Activated CD4-positive, alpha-beta T cell treated with anti-CD3 and anti-CD28 coated beads for 36 hours (primary cell): ENCODE measurements at regions of chr20 and their contacts with region 1.

Region 1: DNA sequence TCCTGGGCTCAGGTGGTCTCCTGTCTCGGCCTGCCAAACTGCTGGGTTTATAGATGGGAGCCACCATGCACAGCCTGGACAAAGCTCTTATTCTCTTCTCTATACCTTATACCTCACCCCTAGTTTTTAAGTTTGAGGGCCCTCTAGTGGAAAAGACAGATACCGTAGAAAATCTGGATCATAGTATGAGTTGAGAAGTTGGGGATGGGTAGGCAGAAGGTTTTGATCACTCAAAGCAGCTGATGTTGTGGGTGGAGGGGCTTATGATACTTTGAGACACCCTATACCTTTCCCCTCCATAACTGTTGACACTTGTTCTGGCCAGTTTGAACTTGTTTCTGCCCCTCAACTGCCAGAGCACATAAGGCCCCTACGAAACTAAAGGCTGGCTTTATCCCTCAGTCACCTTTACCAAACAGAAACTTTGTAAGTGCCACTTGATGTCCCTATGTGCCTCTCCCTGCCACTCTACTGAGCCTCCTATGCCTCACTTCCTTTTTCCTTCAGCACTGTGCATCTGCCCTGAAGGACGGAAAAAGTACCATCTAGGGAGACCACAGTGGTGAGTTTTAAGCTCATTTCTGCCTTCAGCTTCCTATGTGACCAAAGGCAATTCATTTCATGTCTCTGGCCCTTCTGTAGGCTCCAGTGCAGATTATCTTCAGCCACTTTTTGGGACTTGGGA is 28.6 kb downstream of the RALY start:
- DNase-seq: no peak
- ATAC-seq: peak; percentile 83
- H3K4me3 Mint-ChIP-seq: no peak overlapping the region
- H3K27ac Mint-ChIP-seq: peak overlapping the region; percentile 49
- H3K4me1 Mint-ChIP-seq: peaks cover 78% of the 10 kb centered on the region
- H3K27me3 Mint-ChIP-seq: no peaks in the 10 kb centered on the region

Region 2: GRCh38 chr20:33862709-33863403 is 159.4 kb before region 1 on chr20:
- CTCF ChIA-PET with region 1: no interaction called
- POLR2A ChIA-PET with region 1: no interaction called
- intact Hi-C with region 1: loop called in 1 of 2 experiments (anchors 2 kb)
- DNase-seq: peak; percentile 69
- ATAC-seq: peak; percentile 60
- H3K4me3 Mint-ChIP-seq: no peak overlapping the region
- H3K27ac Mint-ChIP-seq: no peak overlapping the region
- H3K4me1 Mint-ChIP-seq: peaks cover 20% of the 10 kb centered on the region
- H3K27me3 Mint-ChIP-seq: no peaks in the 10 kb centered on the region

Region 3: GRCh38 chr20:33915726-33916331 is 106.5 kb before region 1 on chr20:
- CTCF ChIA-PET with region 1: interaction called, 11 read pairs
- POLR2A ChIA-PET with region 1: no interaction called
- intact Hi-C with region 1: no loop called
- DNase-seq: peak; percentile 76
- ATAC-seq: peak; percentile 66
- H3K4me3 Mint-ChIP-seq: no peak overlapping the region
- H3K27ac Mint-ChIP-seq: no peak overlapping the region
- H3K4me1 Mint-ChIP-seq: peaks cover 15% of the 10 kb centered on the region
- H3K27me3 Mint-ChIP-seq: no peaks in the 10 kb centered on the region

Region 4: GRCh38 chr20:33933469-33933909 is 88.8 kb before region 1 on chr20:
- CTCF ChIA-PET with region 1: no interaction called
- POLR2A ChIA-PET with region 1: no interaction called
- intact Hi-C with region 1: loop called in 1 of 2 experiments (anchors 5 kb)
- DNase-seq: peak; percentile 78
- ATAC-seq: peak; percentile 96
- H3K4me3 Mint-ChIP-seq: no peak overlapping the region
- H3K27ac Mint-ChIP-seq: no peak overlapping the region
- H3K4me1 Mint-ChIP-seq: no peaks in the 10 kb centered on the region
- H3K27me3 Mint-ChIP-seq: no peaks in the 10 kb centered on the region

Region 5: GRCh38 chr20:33947709-33948295 is 74.5 kb before region 1 on chr20:
- CTCF ChIA-PET with region 1: interaction called, 4 read pairs
- POLR2A ChIA-PET with region 1: no interaction called
- intact Hi-C with region 1: loop called in 1 of 2 experiments (anchors 1 kb)
- DNase-seq: peak; percentile 76
- ATAC-seq: peak; percentile 84
- H3K4me3 Mint-ChIP-seq: no peak overlapping the region
- H3K27ac Mint-ChIP-seq: no peak overlapping the region
- H3K4me1 Mint-ChIP-seq: no peaks in the 10 kb centered on the region
- H3K27me3 Mint-ChIP-seq: peaks cover 4% of the 10 kb centered on the region